Activated T-helper 2 cell treated with anti-CD3 and anti-CD28 coated beads, Interferon-gamma antibody, Interleukin-2, Interleukin-4, amounts not matched to agents 10 μg/mL and 5 μg/mL and 100 μg/mL, durations not matched to agents 14 hours and 24 hours and 36 hours (primary cell): ENCODE measurements at regions of chrX and their contacts with region 1.

Region 1: GRCh38 chrX:18425199-18426003 is at the start of gene CDKL5:
- DNase-seq: peak; percentile 92
- H3K4me3 Mint-ChIP-seq: peak within 1 kb of the TSS; percentile 81
- H3K27ac Mint-ChIP-seq: no peak within 1 kb of the TSS
- H3K4me1 Mint-ChIP-seq: peaks cover 9% of the 10 kb centered on the region
- H3K27me3 Mint-ChIP-seq: peaks cover 23% of the 10 kb centered on the region
- total RNA-seq, gene CDKL5: 0.46 and 0.76 TPM in 2 replicates

Region 2: GRCh38 chrX:17984415-17984814 is 441.0 kb before region 1 on chrX:
- intact Hi-C with region 1: no loop called
- DNase-seq: no peak
- H3K4me3 Mint-ChIP-seq: no peak overlapping the region
- H3K27ac Mint-ChIP-seq: no peak overlapping the region
- H3K4me1 Mint-ChIP-seq: peaks cover 4% of the 10 kb centered on the region
- H3K27me3 Mint-ChIP-seq: no peaks in the 10 kb centered on the region

Region 3: DNA sequence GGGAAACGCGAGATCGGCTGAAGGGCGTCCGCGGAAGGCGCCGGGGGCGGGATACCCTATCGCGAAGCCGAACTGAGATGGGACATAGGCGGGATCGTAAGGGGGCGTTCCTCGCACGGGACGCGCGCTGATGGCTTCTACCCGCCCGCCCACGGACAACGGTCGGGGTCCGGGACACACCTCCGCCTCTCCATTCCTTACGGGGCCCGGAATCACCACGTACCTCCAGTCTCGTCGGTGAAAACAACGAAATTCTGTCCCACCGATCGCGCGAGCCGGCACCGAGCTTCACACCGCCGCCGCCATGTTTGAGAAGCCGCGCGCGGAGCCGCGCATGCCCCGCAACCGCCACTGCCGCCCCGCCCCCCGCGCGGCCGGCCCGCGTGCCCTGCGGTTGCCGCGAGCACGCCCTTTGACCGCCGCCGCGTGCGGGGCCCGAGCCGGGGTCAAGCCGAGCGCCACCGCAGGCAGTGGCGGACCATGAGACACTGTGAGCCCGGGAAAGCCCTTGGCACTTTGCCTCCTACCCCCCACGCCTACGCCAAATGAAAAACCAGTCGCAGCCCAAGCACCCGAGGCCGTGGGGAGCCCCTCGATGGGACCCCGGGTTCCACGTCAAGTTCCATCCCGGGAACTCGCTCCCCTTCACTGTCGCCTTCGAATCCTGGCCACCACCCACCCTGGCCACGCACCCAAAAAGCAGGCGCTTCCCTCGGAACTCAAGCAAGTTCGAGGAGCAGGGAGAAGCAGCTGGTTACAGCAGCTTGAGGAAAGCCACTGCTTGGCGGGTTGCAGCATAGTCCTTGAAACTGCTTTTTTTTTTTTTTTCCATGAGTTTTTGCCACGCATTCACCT is 70.8 kb before region 1 on chrX and contains the start of gene SCML2:
- intact Hi-C with region 1: no loop called
- DNase-seq: peak; percentile 26
- H3K4me3 Mint-ChIP-seq: peak within 1 kb of the TSS; percentile 70
- H3K27ac Mint-ChIP-seq: no peak within 1 kb of the TSS
- H3K4me1 Mint-ChIP-seq: peaks cover 2% of the 10 kb centered on the region
- H3K27me3 Mint-ChIP-seq: peaks cover 43% of the 10 kb centered on the region
- total RNA-seq, gene SCML2: 2.8 and 3.6 TPM in 2 replicates

Region 4: DNA sequence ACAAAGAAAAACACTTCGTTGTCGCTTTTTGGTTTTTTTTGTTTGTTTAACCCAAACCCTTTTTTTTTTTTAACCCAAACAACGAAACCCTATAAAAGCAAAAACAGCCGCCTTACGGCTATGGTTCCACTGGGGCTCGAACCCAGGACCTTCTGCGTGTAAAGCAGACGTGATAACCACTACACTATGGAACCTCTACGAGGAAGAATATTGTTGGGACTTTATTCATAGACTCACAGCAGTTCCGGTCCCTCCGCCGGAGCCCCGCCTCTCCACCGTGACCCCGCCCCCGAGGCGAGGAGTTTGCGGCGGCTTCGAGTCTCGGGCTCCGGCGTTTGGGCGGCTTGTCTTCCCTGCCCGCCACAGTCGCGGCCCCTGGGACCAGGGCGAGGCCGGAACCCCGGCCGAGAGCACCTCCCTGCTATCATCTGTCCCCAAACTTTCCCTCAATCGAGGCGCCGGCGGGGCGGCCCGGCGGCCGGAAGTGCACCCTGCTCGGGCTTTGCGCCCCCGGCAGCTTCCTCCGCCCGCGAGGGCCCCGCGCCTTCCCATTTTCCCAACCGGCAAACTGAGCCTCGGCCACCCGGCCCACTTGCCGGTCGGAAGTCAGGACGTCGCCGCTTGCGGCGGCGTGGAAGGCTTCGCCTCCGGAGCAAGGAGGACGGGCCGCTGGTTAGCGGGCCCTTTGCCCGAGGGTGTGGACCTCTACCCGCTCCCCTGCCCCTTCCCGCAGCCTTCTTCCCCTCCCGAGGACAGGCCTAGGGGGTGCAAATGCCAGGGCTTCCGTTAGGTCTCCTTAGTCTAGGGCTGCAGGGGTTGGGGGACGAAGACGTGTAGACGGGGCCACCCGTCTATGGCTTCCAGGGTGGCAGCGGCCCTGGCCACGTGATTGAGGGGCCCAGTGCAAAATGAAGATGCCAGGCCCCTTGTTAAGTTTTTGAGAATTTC is 249.7 kb after region 1 on chrX:
- intact Hi-C with region 1: loop called (anchors 1 kb)
- DNase-seq: peak; percentile 74
- H3K4me3 Mint-ChIP-seq: peak overlapping the region; percentile 69
- H3K27ac Mint-ChIP-seq: peak overlapping the region; percentile 67
- H3K4me1 Mint-ChIP-seq: peaks cover 6% of the 10 kb centered on the region
- H3K27me3 Mint-ChIP-seq: peaks cover 4% of the 10 kb centered on the region

Region 5: DNA sequence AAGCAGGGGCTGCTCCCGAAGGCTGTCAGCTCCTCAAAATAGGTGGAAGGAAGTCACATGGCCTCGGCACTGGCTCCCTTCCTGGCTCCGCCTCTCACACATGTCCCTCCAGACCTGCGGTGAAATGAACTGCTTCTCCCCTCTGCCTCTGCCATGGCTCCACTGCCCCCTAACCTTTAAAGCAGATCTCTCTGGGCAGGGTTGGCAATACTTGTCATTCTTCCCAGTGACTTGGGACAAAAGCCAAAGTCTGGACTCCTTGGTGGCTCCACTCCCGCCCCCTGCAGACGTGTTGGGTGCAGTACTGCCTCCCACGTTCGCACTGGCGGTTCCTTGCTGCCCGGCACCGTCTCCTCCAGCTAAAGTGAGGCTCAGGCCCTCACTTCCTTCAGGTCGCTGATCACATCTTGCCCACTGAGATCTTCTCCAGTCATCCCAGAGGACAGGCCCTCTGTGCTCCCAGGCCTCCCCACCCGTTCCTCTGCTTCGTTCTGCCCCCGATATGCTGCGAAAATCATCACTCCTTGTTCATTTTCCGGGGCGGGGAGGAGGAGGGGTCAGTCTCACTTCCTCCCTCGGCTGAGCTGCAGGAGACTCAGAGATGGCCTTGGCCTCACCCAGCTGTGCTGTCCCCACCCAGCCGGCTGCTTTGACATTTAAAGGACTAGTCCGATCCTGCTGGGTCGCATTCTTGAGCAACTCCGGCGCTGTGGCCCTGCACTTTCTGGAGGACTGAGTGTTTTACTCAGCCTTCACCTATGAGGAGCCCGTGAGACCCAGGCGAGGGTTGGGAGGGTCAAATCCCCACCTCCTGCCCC is 461.2 kb after region 1 on chrX:
- intact Hi-C with region 1: loop called (anchors 2 kb)
- DNase-seq: peak; percentile 17
- H3K4me3 Mint-ChIP-seq: peak overlapping the region; percentile 84
- H3K27ac Mint-ChIP-seq: peak overlapping the region; percentile 84
- H3K4me1 Mint-ChIP-seq: peaks cover 18% of the 10 kb centered on the region
- H3K27me3 Mint-ChIP-seq: no peaks in the 10 kb centered on the region

Region 6: DNA sequence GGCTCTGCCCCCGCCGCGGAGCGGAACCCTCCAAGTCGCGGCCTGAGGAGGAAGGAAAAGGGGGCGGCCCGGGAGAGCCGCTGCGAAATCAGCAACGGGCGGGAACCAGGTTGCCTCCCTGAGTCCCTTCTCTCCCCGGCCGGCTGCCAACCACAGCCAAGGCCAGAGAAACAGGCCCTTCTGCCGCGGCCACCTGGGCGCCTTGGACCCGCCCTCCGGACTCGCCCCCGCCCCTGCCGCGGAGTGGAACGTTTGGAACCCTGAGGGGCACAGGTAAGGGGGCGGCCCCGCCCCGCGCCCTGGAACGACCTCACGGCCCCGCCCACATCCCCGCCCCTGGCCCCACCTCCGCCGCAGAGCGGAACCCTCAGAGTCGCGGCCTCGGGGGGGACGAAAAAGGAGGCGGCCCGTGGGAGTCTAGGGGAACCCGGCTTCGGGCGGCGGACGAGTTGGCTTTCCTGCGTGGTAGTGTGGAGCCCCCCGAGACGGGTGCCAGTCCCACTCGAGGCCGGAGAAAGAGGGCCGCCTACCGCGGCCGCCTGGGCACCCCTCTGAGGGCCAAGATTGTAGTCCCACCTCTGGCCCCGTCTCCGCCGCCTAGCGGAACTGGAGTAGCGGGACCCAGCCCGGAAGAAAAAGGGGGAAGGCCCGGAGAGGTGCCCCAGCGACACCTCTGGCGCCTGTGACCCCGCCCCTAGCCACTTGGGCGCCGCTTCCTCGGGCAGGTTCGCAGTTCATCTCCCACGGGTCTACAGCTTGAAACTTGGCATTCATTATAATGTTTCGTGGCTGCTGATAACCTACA is 559.2 kb after region 1 on chrX:
- intact Hi-C with region 1: loop called (anchors 5 kb)
- DNase-seq: peak; percentile 76
- H3K4me3 Mint-ChIP-seq: peak overlapping the region; percentile 84
- H3K27ac Mint-ChIP-seq: peak overlapping the region; percentile 78
- H3K4me1 Mint-ChIP-seq: peaks cover 6% of the 10 kb centered on the region
- H3K27me3 Mint-ChIP-seq: no peaks in the 10 kb centered on the region

Region 7: GRCh38 chrX:19343535-19344408 is 918.4 kb after region 1 on chrX and contains the start of gene PDHA1:
- intact Hi-C with region 1: loop called (anchors 10 kb)
- DNase-seq: peak; percentile 88
- H3K4me3 Mint-ChIP-seq: peak within 1 kb of the TSS; percentile 85
- H3K27ac Mint-ChIP-seq: peak within 1 kb of the TSS; percentile 76
- H3K4me1 Mint-ChIP-seq: peaks cover 15% of the 10 kb centered on the region
- H3K27me3 Mint-ChIP-seq: no peaks in the 10 kb centered on the region
- total RNA-seq, gene PDHA1: 200 and 208 TPM in 2 replicates